PC-3 (cell line): ENCODE measurements at regions of chr1 and their contacts with region 1.

Region 1: GRCh38 chr1:242690849-242691602 is 166.5 kb upstream of the PLD5 start:
- DNase-seq: no peak
- ATAC-seq: no peak
- H3K4me3 ChIP-seq: no peak overlapping the region
- H3K27ac ChIP-seq: no peak overlapping the region
- H3K4me1 ChIP-seq: no peaks in the 10 kb centered on the region
- H3K27me3 ChIP-seq: peaks cover 13% of the 10 kb centered on the region
- CTCF ChIP-seq: no peak

Region 2: GRCh38 chr1:242623119-242623518 is 67.9 kb before region 1 on chr1:
- CTCF ChIA-PET with region 1: no interaction called
- POLR2A ChIA-PET with region 1: no interaction called
- intact Hi-C with region 1: no loop called
- DNase-seq: no peak
- ATAC-seq: no peak
- H3K4me3 ChIP-seq: no peak overlapping the region
- H3K27ac ChIP-seq: no peak overlapping the region
- H3K4me1 ChIP-seq: no peaks in the 10 kb centered on the region
- H3K27me3 ChIP-seq: no peaks in the 10 kb centered on the region
- CTCF ChIP-seq: no peak

Region 3: GRCh38 chr1:242673652-242674051 is 17.4 kb before region 1 on chr1:
- CTCF ChIA-PET with region 1: no interaction called
- POLR2A ChIA-PET with region 1: no interaction called
- intact Hi-C with region 1: no loop called
- DNase-seq: no peak
- ATAC-seq: no peak
- H3K4me3 ChIP-seq: no peak overlapping the region
- H3K27ac ChIP-seq: no peak overlapping the region
- H3K4me1 ChIP-seq: no peaks in the 10 kb centered on the region
- H3K27me3 ChIP-seq: peaks cover 14% of the 10 kb centered on the region
- CTCF ChIP-seq: no peak

Region 4: GRCh38 chr1:242703467-242703866 is 12.4 kb after region 1 on chr1:
- CTCF ChIA-PET with region 1: no interaction called
- POLR2A ChIA-PET with region 1: no interaction called
- intact Hi-C with region 1: loop called (anchors 2 kb)
- DNase-seq: no peak
- ATAC-seq: no peak
- H3K4me3 ChIP-seq: no peak overlapping the region
- H3K27ac ChIP-seq: no peak overlapping the region
- H3K4me1 ChIP-seq: no peaks in the 10 kb centered on the region
- H3K27me3 ChIP-seq: peaks cover 48% of the 10 kb centered on the region
- CTCF ChIP-seq: no peak